Heart right ventricle (tissue), 16 donors: ENCODE measurements at regions of chr4 and their contacts with region 1.

Region 1: DNA sequence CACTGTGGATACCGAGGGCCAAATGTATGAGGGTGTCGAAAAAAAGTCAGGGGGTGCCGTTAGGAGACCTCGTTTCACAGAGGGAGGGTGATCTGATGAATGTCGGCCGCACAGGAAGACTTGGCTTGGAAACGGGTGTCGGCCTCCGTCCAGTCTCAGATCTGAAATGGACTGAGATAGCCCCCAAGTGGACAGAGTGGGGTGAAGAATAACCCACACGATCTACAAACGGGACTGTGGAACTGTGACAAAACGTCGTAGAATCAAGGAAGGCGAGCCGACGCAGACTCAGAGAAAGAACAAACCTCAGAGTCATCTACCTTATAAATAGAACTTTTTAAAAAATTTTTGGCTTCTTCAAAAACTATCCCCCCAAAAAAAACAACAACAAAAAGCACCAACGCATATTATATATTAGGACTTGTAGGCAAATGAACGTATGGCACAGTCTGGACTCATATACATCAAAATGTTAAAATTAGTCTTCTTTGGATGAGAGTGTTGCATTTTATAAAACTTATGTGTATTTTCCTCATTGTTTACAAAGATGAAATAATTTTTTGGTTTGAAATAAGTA is 63.8 kb upstream of the IRF2 start:
- DNase-seq: peak; percentile 85 to 93
- ATAC-seq: peak; percentile 90 to 97 (median 94)
- H3K4me3 ChIP-seq: peak overlapping the region in 9 of 10 donors; percentile 60 to 72 (median 71)
- H3K27ac ChIP-seq: peak overlapping the region; percentile 87 to 99 (median 96)
- H3K4me1 ChIP-seq: peaks cover 2 to 43% (median 31%) of the 10 kb centered on the region in 9 donors
- H3K27me3 ChIP-seq: no peaks in the 10 kb centered on the region
- CTCF ChIP-seq: peak; percentile 42 to 84 (median 75)

Region 2: GRCh38 chr4:184263910-184264732 is 274.0 kb before region 1 on chr4:
- intact Hi-C with region 1: loop called (anchors 1 to 5 kb)
- DNase-seq: peak; percentile 90 to 94
- ATAC-seq: peak; percentile 74 to 89 (median 86)
- H3K4me3 ChIP-seq: peak overlapping the region in 2 of 10 donors; percentile 20 to 27
- H3K27ac ChIP-seq: no peak overlapping the region
- H3K4me1 ChIP-seq: peaks cover 0 to 46% (median 7%) of the 10 kb centered on the region in 9 donors
- H3K27me3 ChIP-seq: no peaks in the 10 kb centered on the region
- CTCF ChIP-seq: peak; percentile 88 to 93 (median 91)

Region 3: DNA sequence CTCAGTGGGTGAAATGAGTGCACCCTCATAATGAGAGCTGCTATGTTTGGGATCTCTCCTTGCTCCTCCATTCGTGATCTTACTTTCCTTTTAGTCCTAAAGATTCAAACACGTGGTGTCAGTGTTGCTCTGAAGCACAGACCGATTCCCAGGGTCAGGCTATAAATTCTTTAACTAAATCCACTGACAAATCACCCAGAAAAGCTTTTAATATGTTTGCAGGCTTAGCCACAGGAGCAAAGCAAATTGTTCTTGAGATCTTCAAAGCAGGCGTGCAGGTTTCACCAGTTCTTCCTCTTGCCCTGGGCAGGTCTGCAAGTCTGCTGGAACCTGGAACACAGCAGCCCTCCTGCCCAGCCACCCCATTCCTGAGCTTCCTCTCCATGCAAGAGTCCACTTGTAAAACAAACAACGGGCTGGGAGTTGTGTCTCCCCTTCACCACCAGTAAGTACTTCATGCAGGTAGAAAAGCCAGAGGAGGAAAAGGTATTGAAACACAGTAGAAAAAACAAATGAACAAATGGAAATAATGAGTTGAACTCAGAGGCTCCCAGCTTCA is 250.3 kb before region 1 on chr4:
- intact Hi-C with region 1: loop called in 8 of 10 experiments (anchors 1 to 5 kb)
- DNase-seq: no peak
- ATAC-seq: peak; percentile 53 to 82 (median 76)
- H3K4me3 ChIP-seq: no peak overlapping the region
- H3K27ac ChIP-seq: peak overlapping the region in 3 of 10 donors; percentile 0 to 34 (median 5)
- H3K4me1 ChIP-seq: peaks cover 0 to 20% (median 9%) of the 10 kb centered on the region in 9 donors
- H3K27me3 ChIP-seq: no peaks in the 10 kb centered on the region
- CTCF ChIP-seq: peak in 8 of 9 donors; percentile 14 to 66 (median 48)

Region 4: GRCh38 chr4:184343502-184344177 is 194.5 kb before region 1 on chr4:
- intact Hi-C with region 1: loop called in 3 of 10 experiments (anchors 5 kb)
- DNase-seq: peak; percentile 54 to 84
- ATAC-seq: peak; percentile 73 to 88 (median 84)
- H3K4me3 ChIP-seq: peak overlapping the region; percentile 33 to 78 (median 60)
- H3K27ac ChIP-seq: peak overlapping the region; percentile 1 to 95 (median 84)
- H3K4me1 ChIP-seq: peaks cover 10 to 76% (median 47%) of the 10 kb centered on the region in 9 donors
- H3K27me3 ChIP-seq: no peaks in the 10 kb centered on the region
- CTCF ChIP-seq: no peak

Region 5: GRCh38 chr4:184384056-184384809 is 153.9 kb before region 1 on chr4:
- intact Hi-C with region 1: loop called in 4 of 10 experiments (anchors 5 to 10 kb)
- DNase-seq: no peak
- ATAC-seq: peak in 7 of 8 donors; percentile 22 to 48 (median 39)
- H3K4me3 ChIP-seq: peak overlapping the region in 8 of 10 donors; percentile 8 to 41 (median 28)
- H3K27ac ChIP-seq: peak overlapping the region; percentile 85 to 95 (median 89)
- H3K4me1 ChIP-seq: peaks cover 32 to 78% (median 67%) of the 10 kb centered on the region in 9 donors
- H3K27me3 ChIP-seq: no peaks in the 10 kb centered on the region
- CTCF ChIP-seq: no peak

Region 6: GRCh38 chr4:184395971-184396391 is 142.1 kb before region 1 on chr4:
- intact Hi-C with region 1: loop called in 4 of 10 experiments (anchors 5 to 10 kb)
- DNase-seq: no peak
- ATAC-seq: peak in 1 of 8 donors; percentile 11
- H3K4me3 ChIP-seq: no peak overlapping the region
- H3K27ac ChIP-seq: peak overlapping the region; percentile 2 to 88 (median 64)
- H3K4me1 ChIP-seq: peaks cover under 1 to 98% (median 40%) of the 10 kb centered on the region in 9 donors
- H3K27me3 ChIP-seq: no peaks in the 10 kb centered on the region
- CTCF ChIP-seq: no peak

Region 7: DNA sequence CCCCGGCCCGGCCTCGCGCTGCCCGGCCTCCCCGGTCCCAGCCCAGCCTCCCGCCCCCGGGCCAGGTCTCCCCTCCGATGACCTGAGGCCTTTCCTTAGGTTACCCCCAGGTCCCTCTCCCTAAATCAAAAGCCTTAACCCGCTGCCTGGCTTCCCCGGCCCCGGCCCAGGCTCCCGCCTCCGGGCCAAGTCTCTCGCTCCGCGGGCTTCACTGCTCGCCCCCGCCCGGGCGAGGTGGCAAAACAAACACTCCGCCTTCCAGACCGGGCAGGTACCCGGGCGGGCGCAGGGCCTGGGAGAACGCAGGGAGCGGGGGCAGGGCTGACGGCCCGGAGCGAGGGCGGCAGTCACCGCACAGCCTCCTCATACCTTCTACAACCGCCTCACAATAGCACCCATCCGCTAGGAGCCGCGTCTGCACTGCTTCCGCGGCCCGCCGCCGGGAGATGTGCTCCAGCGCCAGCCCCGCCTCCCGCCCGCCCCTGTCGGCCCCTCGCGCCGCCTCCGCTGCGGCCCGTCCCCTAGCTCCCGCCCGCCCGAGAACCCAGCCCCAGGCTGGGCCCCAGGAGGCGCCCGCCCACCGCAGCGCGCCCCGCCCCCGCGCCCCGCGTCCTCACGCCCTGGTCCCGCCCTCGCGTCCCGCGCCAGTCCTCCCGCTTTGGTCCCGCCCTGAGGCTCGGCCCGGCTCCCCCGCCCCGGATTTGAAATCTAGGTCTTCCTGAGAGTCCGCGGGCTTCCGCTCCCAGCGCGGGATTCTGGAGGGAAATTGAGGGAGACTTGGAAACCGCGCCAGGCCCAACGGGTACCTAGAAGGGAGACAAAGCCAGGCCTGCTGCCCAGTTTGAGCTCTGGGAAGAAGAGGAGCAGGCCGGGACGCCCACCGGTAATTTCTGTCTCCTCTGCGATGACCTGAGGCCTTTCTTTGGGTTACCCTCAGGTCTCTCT is 111.2 kb after region 1 on chr4 and contains the starts of genes CASP3 and PRIMPOL:
- intact Hi-C with region 1: loop called in 1 of 10 experiments (anchors 5 kb)
- DNase-seq: peak; percentile 97 to 99
- ATAC-seq: peak; percentile 92 to 98 (median 96)
- H3K4me3 ChIP-seq: peak within 1 kb of the TSS; percentile 72 to 96 (median 84)
- H3K27ac ChIP-seq: peak within 1 kb of the TSS; percentile 87 to 100 (median 98)
- H3K4me1 ChIP-seq: peaks cover 13 to 60% (median 50%) of the 10 kb centered on the region in 9 donors
- H3K27me3 ChIP-seq: no peaks in the 10 kb centered on the region
- CTCF ChIP-seq: peak in 8 of 9 donors; percentile 10 to 59 (median 38)
- total RNA-seq, gene CASP3: 7.9 to 24.8 (median 13.5) TPM
- total RNA-seq, gene PRIMPOL: 7.2 to 13.7 (median 10.8) TPM